Naive thymus-derived CD4-positive, alpha-beta T cell (primary cell): ENCODE measurements at regions of chr4 and their contacts with region 1.

Region 1: DNA sequence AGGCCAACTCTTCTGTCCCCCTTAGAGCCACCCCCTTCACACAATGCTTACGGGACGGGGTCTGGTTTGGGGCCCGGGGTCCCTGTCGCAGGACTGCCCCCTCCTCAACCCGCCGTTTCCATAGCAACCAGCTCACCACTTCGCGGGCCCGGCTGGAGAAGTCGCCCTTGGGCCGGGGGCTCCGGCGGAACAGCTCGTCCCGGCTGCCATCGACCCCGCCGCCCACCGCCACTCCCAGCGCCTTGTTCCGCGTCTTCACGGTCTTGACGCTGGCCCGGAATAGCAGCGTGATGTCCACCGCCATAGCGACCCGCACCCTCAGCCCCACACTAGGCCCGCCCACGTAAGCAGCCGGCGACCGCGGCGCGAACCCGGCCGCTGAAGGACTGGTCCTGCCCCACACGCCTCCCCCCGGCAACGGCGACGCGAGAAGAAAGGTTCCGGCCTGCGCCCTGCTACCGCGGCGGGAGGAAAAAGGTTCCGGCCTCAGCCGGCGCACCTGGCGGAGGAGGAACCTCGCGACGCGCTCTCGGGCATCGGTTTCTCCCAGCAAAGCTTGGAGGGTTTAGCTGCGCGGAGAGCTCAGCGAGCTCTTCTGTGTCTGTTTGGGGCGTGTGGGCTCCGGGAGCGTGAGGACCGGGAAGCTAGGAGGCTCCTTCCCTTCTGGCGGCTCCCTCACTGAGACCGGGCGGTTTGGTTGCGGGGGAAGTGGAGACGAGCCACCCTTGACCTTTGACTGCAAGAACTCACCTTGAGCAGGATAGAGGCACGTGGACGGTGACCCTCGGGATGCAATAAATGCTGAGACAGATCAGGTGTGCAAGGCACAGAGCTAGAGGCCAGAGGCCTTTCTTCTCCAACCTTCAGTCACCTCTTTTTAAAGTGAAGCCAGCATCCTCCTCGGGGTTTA is at the start of gene STX18:
- DNase-seq: peak; percentile 76 to 94 (median 84)
- ATAC-seq: peak; percentile 95
- H3K4me3 ChIP-seq: peak within 1 kb of the TSS; percentile 91
- H3K4me3 Mint-ChIP-seq: peak within 1 kb of the TSS; percentile 93 to 99 (median 98)
- H3K27ac ChIP-seq: peak within 1 kb of the TSS; percentile 77
- H3K27ac Mint-ChIP-seq: peak within 1 kb of the TSS; percentile 88 to 97 (median 95)
- H3K4me1 ChIP-seq: peaks cover 18 to 22% of the 10 kb centered on the region in 2 donors
- H3K4me1 Mint-ChIP-seq: peaks cover 34 to 76% (median 61%) of the 10 kb centered on the region in 7 donors
- H3K27me3 ChIP-seq: no peaks in the 10 kb centered on the region
- H3K27me3 Mint-ChIP-seq: no peaks in the 10 kb centered on the region
- total RNA-seq, gene STX18: 19.0 to 28.0 (median 22.7) TPM

Region 2: GRCh38 chr4:4289941-4290850 is 251.7 kb before region 1 on chr4 and contains the starts of genes LYAR and ZBTB49:
- CTCF ChIA-PET with region 1: no interaction called
- POLR2A ChIA-PET with region 1: no interaction called
- intact Hi-C with region 1: loop called (anchors 1 to 2 kb)
- DNase-seq: peak; percentile 89 to 99 (median 96)
- ATAC-seq: peak; percentile 96
- H3K4me3 ChIP-seq: peak within 1 kb of the TSS; percentile 81
- H3K4me3 Mint-ChIP-seq: peak within 1 kb of the TSS; percentile 93 to 98 (median 96)
- H3K27ac ChIP-seq: peak within 1 kb of the TSS; percentile 79
- H3K27ac Mint-ChIP-seq: peak within 1 kb of the TSS; percentile 80 to 95 (median 92)
- H3K4me1 ChIP-seq: peaks cover 20 to 21% of the 10 kb centered on the region in 2 donors
- H3K4me1 Mint-ChIP-seq: peaks cover 40 to 77% (median 57%) of the 10 kb centered on the region in 7 donors
- H3K27me3 ChIP-seq: no peaks in the 10 kb centered on the region
- H3K27me3 Mint-ChIP-seq: no peaks in the 10 kb centered on the region
- total RNA-seq, gene LYAR: 11.1 to 27.4 (median 21.0) TPM
- total RNA-seq, gene ZBTB49: 6.3 to 16.1 (median 8.0) TPM

Region 3: DNA sequence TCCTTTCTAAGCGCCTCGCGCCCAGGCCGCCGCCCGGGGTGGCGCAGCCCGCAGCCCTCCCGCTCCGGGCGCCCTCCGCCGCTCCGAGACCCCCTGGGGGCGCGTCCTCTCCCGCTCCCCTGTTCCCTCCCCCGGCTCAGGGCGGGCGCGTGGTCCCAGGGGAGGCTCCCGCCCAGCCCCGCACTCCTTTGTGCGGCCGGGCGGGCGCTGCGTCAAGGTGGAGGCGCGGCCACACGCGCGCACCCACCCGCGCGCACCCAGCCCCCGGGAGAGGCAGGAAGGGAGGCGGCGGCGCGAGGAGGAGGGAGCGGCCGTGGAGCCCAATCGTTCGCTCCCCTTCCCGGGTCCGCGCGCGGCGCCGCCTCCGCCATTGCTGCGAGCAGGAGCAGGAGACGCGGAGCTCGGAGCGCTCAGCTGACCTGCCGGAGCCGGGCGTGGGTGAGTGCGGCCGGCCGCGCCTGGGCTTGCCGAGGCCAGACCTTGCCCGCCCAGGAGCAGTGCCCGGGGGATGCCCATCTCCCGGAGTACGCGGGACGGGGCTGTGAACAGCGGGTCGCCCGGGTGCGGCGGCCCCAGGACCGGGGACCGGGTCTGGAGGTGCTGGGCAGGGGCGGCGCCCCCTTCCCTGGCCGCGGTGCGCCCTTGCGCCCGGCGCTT is 155.1 kb before region 1 on chr4 and contains the start of gene NSG1:
- CTCF ChIA-PET with region 1: no interaction called
- POLR2A ChIA-PET with region 1: no interaction called
- intact Hi-C with region 1: loop called in 1 of 2 experiments (anchors 2 kb)
- DNase-seq: peak in 6 of 9 donors; percentile 21 to 45 (median 35)
- ATAC-seq: peak; percentile 60
- H3K4me3 ChIP-seq: peak within 1 kb of the TSS; percentile 43
- H3K4me3 Mint-ChIP-seq: peak within 1 kb of the TSS; percentile 75 to 89 (median 86)
- H3K27ac ChIP-seq: no peak within 1 kb of the TSS
- H3K27ac Mint-ChIP-seq: peak within 1 kb of the TSS in 4 of 9 donors; percentile 11 to 21 (median 18)
- H3K4me1 ChIP-seq: peaks cover 0 to 3% of the 10 kb centered on the region in 2 donors
- H3K4me1 Mint-ChIP-seq: peaks cover 4 to 23% (median 16%) of the 10 kb centered on the region in 7 donors
- H3K27me3 ChIP-seq: no peaks in the 10 kb centered on the region
- H3K27me3 Mint-ChIP-seq: peaks cover 30 to 60% (median 46%) of the 10 kb centered on the region in 5 donors
- total RNA-seq, gene NSG1: 0.90 to 24.5 (median 19.5) TPM

Region 4: DNA sequence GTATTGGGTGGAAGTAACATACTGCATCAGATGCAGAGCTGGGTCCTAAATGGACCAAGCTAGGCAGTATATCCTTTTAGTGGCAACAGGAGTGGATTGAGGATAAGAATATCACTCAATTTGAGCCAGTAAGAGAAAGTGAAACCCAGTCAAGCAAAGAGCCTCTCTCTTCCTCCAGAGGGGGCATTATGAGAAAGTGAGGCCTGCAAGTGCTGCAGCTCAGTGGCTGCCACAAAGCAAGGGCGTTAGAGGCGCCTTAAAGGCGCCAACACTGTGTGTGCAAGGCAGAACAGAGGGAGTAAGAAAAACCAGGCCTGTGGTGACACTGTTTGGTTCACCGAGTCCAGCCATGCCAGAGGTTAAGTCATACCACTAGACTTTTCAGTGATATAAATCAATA is 17.6 kb before region 1 on chr4:
- CTCF ChIA-PET with region 1: no interaction called
- POLR2A ChIA-PET with region 1: no interaction called
- intact Hi-C with region 1: loop called in 1 of 2 experiments (anchors 2 kb)
- DNase-seq: peak in 3 of 9 donors; percentile 2 to 43 (median 11)
- ATAC-seq: peak; percentile 95
- H3K4me3 ChIP-seq: no peak overlapping the region
- H3K4me3 Mint-ChIP-seq: peak overlapping the region in 4 of 10 donors; percentile 3 to 31 (median 17)
- H3K27ac ChIP-seq: no peak overlapping the region
- H3K27ac Mint-ChIP-seq: peak overlapping the region in 4 of 9 donors; percentile 47 to 63 (median 50)
- H3K4me1 ChIP-seq: no peaks in the 10 kb centered on the region
- H3K4me1 Mint-ChIP-seq: peaks cover 10 to 76% (median 48%) of the 10 kb centered on the region in 7 donors
- H3K27me3 ChIP-seq: no peaks in the 10 kb centered on the region
- H3K27me3 Mint-ChIP-seq: no peaks in the 10 kb centered on the region

Region 5: GRCh38 chr4:4640692-4641091 is 98.8 kb after region 1 on chr4:
- CTCF ChIA-PET with region 1: no interaction called
- POLR2A ChIA-PET with region 1: no interaction called
- intact Hi-C with region 1: no loop called
- DNase-seq: no peak
- ATAC-seq: no peak
- H3K4me3 ChIP-seq: no peak overlapping the region
- H3K4me3 Mint-ChIP-seq: no peak overlapping the region
- H3K27ac ChIP-seq: no peak overlapping the region
- H3K27ac Mint-ChIP-seq: no peak overlapping the region
- H3K4me1 ChIP-seq: no peaks in the 10 kb centered on the region
- H3K4me1 Mint-ChIP-seq: peaks cover 0 to 4% (median 0%) of the 10 kb centered on the region in 7 donors
- H3K27me3 ChIP-seq: no peaks in the 10 kb centered on the region
- H3K27me3 Mint-ChIP-seq: no peaks in the 10 kb centered on the region